ENCODE measurements at regions of chr18 and their contacts with region 1.

Region 1: DNA sequence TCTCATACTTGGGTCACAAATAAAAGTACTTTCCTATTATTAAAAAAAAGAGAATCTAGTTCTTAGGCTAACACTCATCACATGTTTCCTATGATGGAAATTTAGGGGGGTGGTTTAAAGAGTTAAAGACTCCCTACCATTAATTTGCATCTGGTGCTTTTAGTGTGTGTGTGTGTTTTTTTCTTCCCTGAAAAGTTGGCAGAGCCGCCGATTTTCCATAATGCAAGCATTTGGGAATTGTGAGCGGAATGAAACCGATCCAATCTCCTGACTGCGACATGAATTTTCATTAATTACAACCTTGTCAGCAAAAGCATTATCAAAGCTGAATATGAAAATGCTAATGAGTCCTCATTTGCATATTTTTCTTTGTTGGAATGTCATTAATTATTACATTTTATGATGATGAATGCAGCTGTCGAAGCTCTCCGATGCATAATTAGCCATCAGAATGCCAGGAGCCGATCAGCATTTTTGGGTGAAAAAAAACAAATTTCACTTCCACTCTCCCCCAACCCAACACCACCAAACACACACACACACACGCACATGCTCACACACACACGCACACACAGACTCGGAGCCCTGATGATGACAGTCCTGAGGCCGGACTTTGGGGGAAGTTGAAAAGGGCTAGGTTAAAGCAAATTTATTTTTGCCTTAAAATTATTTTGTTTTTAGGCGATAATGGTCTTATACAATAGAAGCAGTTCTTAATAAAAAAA is 165.4 kb downstream of the TCF4 start:
- DNase-seq: no peak
- ATAC-seq: no peak
- H3K4me3 Mint-ChIP-seq: peak overlapping the region; percentile 84
- H3K27ac Mint-ChIP-seq: peak overlapping the region; percentile 75
- H3K4me1 Mint-ChIP-seq: peaks cover 64% of the 10 kb centered on the region
- H3K27me3 Mint-ChIP-seq: peaks cover 2% of the 10 kb centered on the region
- CTCF ChIP-seq: no peak

Region 2: GRCh38 chr18:55405893-55406406 is 16.7 kb before region 1 on chr18:
- CTCF ChIA-PET with region 1: no interaction called
- POLR2A ChIA-PET with region 1: no interaction called
- intact Hi-C with region 1: no loop called
- DNase-seq: no peak
- ATAC-seq: peak; percentile 62
- H3K4me3 Mint-ChIP-seq: no peak overlapping the region
- H3K27ac Mint-ChIP-seq: no peak overlapping the region
- H3K4me1 Mint-ChIP-seq: peaks cover 24% of the 10 kb centered on the region
- H3K27me3 Mint-ChIP-seq: no peaks in the 10 kb centered on the region
- CTCF ChIP-seq: no peak

Region 3: GRCh38 chr18:55440988-55441387 is 18.4 kb after region 1 on chr18:
- CTCF ChIA-PET with region 1: no interaction called
- POLR2A ChIA-PET with region 1: interaction called, 3 read pairs
- intact Hi-C with region 1: loop called (anchors 2 kb)
- DNase-seq: no peak
- ATAC-seq: no peak
- H3K4me3 Mint-ChIP-seq: no peak overlapping the region
- H3K27ac Mint-ChIP-seq: peak overlapping the region; percentile 8
- H3K4me1 Mint-ChIP-seq: peaks cover 46% of the 10 kb centered on the region
- H3K27me3 Mint-ChIP-seq: peaks cover 2% of the 10 kb centered on the region
- CTCF ChIP-seq: no peak

Region 4: DNA sequence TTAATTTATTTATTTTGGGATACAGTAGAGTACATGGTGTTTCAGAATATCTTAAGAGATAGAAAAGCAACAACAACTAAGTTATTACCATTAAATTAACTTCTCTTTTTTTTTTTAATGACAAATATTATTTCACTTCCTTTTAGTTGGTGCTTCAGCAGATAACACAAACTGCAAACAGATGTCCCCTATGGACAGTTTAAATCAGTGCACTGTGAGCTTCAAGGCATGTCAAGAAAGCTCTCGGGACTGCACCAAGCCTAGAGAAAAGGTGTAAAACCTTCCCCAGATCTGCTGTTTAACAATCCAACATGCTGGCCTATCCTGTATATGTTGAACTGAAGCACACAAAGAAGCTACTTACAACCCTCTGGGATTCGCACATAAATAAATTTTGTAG is 42.7 kb after region 1 on chr18:
- CTCF ChIA-PET with region 1: interaction called, 3 read pairs
- POLR2A ChIA-PET with region 1: interaction called, 3 read pairs
- intact Hi-C with region 1: loop called (anchors 2 kb)
- DNase-seq: no peak
- ATAC-seq: peak; percentile 92
- H3K4me3 Mint-ChIP-seq: no peak overlapping the region
- H3K27ac Mint-ChIP-seq: peak overlapping the region; percentile 66
- H3K4me1 Mint-ChIP-seq: peaks cover 40% of the 10 kb centered on the region
- H3K27me3 Mint-ChIP-seq: no peaks in the 10 kb centered on the region
- CTCF ChIP-seq: no peak

Region 5: GRCh38 chr18:55477499-55477859 is 54.9 kb after region 1 on chr18:
- CTCF ChIA-PET with region 1: interaction called, 3 read pairs
- POLR2A ChIA-PET with region 1: interaction called, 14 read pairs
- intact Hi-C with region 1: no loop called
- DNase-seq: peak; percentile 23
- ATAC-seq: peak; percentile 94
- H3K4me3 Mint-ChIP-seq: peak overlapping the region; percentile 97
- H3K27ac Mint-ChIP-seq: peak overlapping the region; percentile 93
- H3K4me1 Mint-ChIP-seq: peaks cover 21% of the 10 kb centered on the region
- H3K27me3 Mint-ChIP-seq: no peaks in the 10 kb centered on the region
- CTCF ChIP-seq: no peak

Region 6: DNA sequence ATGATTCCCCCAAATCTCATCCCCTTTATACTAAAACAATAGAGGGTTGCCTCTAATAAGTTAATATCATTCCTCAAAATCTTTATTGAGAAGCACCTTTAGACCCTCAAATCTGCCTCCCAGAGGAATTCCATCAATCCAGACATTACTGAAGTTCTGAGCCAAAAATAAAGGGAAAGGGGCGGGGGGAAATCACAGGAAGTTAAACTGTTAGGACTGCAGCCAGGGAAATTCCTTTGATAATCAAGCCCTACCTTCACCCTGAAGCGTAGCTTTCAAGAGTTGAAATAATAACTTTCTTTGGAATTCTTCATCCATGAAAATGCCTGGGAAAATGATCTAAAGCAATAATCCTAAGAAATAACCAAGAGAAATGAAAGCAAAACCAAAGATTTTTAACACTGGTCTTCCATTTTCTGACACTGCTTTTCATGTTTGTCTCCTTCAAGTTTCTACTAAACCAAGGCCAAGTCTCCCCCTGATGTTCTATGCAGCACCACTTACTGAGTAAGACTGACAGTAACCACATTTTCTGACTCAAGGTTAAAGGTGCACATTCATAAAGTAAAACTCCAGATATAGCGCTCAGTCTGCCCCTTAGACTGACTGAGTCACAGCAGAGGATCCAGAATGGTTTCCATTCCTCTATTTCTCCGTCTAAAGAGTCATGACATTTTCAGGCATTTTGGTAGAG is 87.2 kb after region 1 on chr18:
- CTCF ChIA-PET with region 1: no interaction called
- POLR2A ChIA-PET with region 1: interaction called, 6 read pairs
- intact Hi-C with region 1: loop called (anchors 2 kb)
- DNase-seq: no peak
- ATAC-seq: peak; percentile 82
- H3K4me3 Mint-ChIP-seq: peak overlapping the region; percentile 61
- H3K27ac Mint-ChIP-seq: peak overlapping the region; percentile 68
- H3K4me1 Mint-ChIP-seq: peaks cover 56% of the 10 kb centered on the region
- H3K27me3 Mint-ChIP-seq: no peaks in the 10 kb centered on the region
- CTCF ChIP-seq: no peak

Measured in activated B cell treated with CpG ODN at 0.5 μM for 24 hours (primary cell).